ENCODE measurements at regions of chr4 and their contacts with region 1.

Region 1: DNA sequence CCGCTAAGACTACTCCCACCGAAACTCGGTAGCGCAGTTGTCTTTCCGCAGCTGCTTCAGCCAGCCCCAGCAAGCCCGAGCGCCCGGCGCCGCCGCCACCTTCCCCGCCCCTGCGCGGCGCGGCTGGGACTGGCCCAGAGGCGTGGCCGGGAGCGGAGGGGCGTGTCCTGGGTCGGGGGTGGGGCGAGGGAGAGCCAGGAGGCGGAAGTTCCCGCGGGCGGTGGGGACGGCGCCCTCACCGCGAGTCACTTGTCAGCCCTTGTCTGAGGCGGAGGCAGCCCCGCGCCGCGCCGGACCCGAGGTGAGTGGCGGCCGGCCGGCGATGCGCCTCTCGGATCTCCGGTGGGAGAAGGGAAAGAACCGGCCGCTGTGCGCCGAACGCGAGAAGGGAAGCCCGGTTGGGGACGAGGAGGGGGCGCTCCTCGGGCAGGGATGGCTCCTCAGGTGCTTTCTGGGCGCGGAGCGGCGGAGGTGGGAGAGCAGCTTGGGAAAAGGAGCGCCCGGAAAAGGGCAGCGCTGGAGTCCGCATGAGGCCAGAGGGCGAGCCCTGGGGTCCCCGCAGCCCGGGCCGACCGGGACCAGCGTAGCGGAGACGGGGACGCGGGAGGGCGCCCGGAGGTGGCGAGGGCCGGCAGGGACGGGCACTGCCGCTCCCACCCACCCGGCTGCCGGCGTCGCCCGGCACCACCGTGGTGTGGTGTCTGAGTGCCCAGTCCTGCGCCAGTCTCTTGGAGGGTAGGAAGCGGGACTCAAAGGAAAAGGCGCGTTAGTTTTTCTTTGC is at the start of gene PDLIM5:
- DNase-seq: peak; percentile 94
- H3K4me3 ChIP-seq: peak within 1 kb of the TSS; percentile 97
- H3K27ac ChIP-seq: peak within 1 kb of the TSS; percentile 96 to 97
- H3K4me1 ChIP-seq: no peaks in the 10 kb centered on the region
- H3K27me3 ChIP-seq: no peaks in the 10 kb centered on the region
- CTCF ChIP-seq: no peak
- POLR2A ChIP-seq: peak; percentile 96
- total RNA-seq, gene PDLIM5: 115 to 228 TPM

Region 2: GRCh38 chr4:94516067-94516466 is 64.2 kb after region 1 on chr4:
- intact Hi-C with region 1: loop called (anchors 5 kb)
- DNase-seq: peak; percentile 23
- H3K4me3 ChIP-seq: no peak overlapping the region
- H3K27ac ChIP-seq: peak overlapping the region; percentile 6 to 65
- H3K4me1 ChIP-seq: peaks cover 8% of the 10 kb centered on the region
- H3K27me3 ChIP-seq: no peaks in the 10 kb centered on the region
- CTCF ChIP-seq: no peak
- POLR2A ChIP-seq: no peak

Region 3: GRCh38 chr4:94595879-94596483 is 144.1 kb after region 1 on chr4:
- intact Hi-C with region 1: loop called (anchors 5 kb)
- DNase-seq: peak; percentile 21
- H3K4me3 ChIP-seq: no peak overlapping the region
- H3K27ac ChIP-seq: no peak overlapping the region
- H3K4me1 ChIP-seq: no peaks in the 10 kb centered on the region
- H3K27me3 ChIP-seq: no peaks in the 10 kb centered on the region
- CTCF ChIP-seq: peak in 3 of 4 experiments; percentile 55 to 79 (median 74)
- POLR2A ChIP-seq: no peak